T-cell (primary cell): ENCODE measurements at regions of chr13 and their contacts with region 1.

Region 1: DNA sequence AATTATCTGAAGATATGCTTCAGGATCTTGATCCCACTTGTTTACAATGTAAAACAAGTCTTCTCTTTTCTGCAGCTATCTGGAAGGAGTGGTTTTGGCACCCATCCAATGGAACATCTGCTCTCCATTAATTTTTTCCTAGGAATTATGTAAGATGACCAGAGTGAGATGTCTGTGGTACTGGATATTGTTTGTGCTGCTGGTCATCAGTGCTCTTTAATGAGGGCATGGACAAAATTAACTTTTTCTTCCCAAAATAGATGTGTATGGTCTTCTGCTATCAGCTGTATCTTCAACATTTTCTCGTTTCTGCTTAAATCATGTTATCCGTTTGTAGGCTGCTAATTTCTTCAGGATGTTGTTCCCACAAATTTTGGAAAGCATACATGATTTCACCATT is 415.4 kb upstream of the KLHL1 start:
- DNase-seq: no peak
- ATAC-seq: no peak
- H3K4me3 ChIP-seq: no peak overlapping the region
- H3K4me3 Mint-ChIP-seq: no peak overlapping the region
- H3K27ac ChIP-seq: no peak overlapping the region
- H3K27ac Mint-ChIP-seq: no peak overlapping the region
- H3K4me1 ChIP-seq: no peaks in the 10 kb centered on the region
- H3K4me1 Mint-ChIP-seq: no peaks in the 10 kb centered on the region
- H3K27me3 ChIP-seq: no peaks in the 10 kb centered on the region
- H3K27me3 Mint-ChIP-seq: no peaks in the 10 kb centered on the region

Region 2: DNA sequence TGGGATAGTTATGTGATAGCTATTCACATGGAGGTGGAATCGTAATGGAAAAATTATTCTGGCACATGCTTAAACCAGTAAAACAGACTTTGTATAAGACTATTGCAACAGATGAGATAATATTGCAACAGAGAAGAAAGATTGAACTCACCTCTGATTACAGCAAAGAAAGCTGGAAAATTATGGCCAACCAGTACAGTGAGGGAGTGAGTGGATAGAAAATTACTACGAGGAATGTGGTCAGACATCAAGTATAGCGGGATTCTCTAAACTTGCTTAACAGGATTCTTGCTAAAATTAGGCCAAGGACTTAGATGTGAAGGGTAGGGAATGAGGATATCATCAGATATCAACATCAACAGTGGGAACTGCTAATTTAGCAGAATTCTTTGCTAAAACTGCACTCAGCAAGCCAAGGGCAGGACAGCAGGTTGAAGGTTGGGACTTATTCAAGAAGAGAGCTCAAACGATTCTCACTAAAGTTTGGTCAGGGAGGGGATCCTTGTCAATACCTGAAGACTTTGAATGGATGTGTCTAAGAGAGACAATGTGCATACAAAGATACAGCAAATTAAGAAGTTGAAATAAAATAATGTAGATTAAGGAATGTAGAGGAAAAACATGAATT is 17.7 kb before region 1 on chr13:
- CTCF ChIA-PET with region 1: no interaction called
- POLR2A ChIA-PET with region 1: no interaction called
- DNase-seq: no peak
- ATAC-seq: no peak
- H3K4me3 ChIP-seq: no peak overlapping the region
- H3K4me3 Mint-ChIP-seq: no peak overlapping the region
- H3K27ac ChIP-seq: no peak overlapping the region
- H3K27ac Mint-ChIP-seq: no peak overlapping the region
- H3K4me1 ChIP-seq: no peaks in the 10 kb centered on the region
- H3K4me1 Mint-ChIP-seq: no peaks in the 10 kb centered on the region
- H3K27me3 ChIP-seq: no peaks in the 10 kb centered on the region
- H3K27me3 Mint-ChIP-seq: no peaks in the 10 kb centered on the region

Region 3: DNA sequence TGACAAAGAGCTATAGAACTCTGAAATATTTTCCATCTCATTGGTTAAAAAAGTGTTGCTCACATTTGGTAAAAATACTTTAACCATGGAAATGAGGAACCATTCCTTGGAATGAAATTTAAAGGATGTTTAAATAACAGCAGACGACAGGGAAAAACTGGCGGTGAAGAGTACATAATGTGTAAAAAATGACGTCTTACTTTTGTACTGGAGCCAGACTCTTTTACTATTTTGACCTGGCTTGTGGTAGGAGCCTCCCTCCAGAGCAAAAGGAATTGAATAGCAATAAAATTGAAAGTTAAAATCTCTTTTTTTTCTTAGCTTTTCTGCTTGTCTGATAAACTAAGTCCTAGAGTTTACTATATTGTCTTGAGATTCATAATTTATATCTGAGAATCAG is 10.8 kb after region 1 on chr13:
- CTCF ChIA-PET with region 1: interaction called in 1 of 2 experiments, 11 read pairs
- POLR2A ChIA-PET with region 1: no interaction called
- DNase-seq: no peak
- ATAC-seq: no peak
- H3K4me3 ChIP-seq: no peak overlapping the region
- H3K4me3 Mint-ChIP-seq: no peak overlapping the region
- H3K27ac ChIP-seq: no peak overlapping the region
- H3K27ac Mint-ChIP-seq: no peak overlapping the region
- H3K4me1 ChIP-seq: no peaks in the 10 kb centered on the region
- H3K4me1 Mint-ChIP-seq: no peaks in the 10 kb centered on the region
- H3K27me3 ChIP-seq: no peaks in the 10 kb centered on the region
- H3K27me3 Mint-ChIP-seq: no peaks in the 10 kb centered on the region